Aorta (tissue), 5 donors: ENCODE measurements at regions of chr12 and their contacts with region 1.

Region 1: GRCh38 chr12:119328111-119328510 is 6.4 kb upstream of the CCDC60 start:
- DNase-seq: no peak
- ATAC-seq: no peak
- H3K4me3 ChIP-seq: no peak overlapping the region
- H3K27ac ChIP-seq: no peak overlapping the region
- H3K4me1 ChIP-seq: peaks cover 0 to 10% of the 10 kb centered on the region in 2 donors
- H3K27me3 ChIP-seq: no peaks in the 10 kb centered on the region

Region 2: GRCh38 chr12:119249326-119250155 is 78.6 kb before region 1 on chr12:
- intact Hi-C with region 1: loop called in 1 of 2 experiments (anchors 5 kb)
- DNase-seq: no peak
- ATAC-seq: no peak
- H3K4me3 ChIP-seq: no peak overlapping the region
- H3K27ac ChIP-seq: no peak overlapping the region
- H3K4me1 ChIP-seq: peaks cover 2 to 5% of the 10 kb centered on the region in 2 donors
- H3K27me3 ChIP-seq: no peaks in the 10 kb centered on the region

Region 3: GRCh38 chr12:119444456-119445044 is 116.4 kb after region 1 on chr12:
- intact Hi-C with region 1: no loop called
- DNase-seq: no peak
- ATAC-seq: no peak
- H3K4me3 ChIP-seq: no peak overlapping the region
- H3K27ac ChIP-seq: no peak overlapping the region
- H3K4me1 ChIP-seq: no peaks in the 10 kb centered on the region
- H3K27me3 ChIP-seq: no peaks in the 10 kb centered on the region